PC-3 (cell line): ENCODE measurements at regions of chr11 and their contacts with region 1.

Region 1: DNA sequence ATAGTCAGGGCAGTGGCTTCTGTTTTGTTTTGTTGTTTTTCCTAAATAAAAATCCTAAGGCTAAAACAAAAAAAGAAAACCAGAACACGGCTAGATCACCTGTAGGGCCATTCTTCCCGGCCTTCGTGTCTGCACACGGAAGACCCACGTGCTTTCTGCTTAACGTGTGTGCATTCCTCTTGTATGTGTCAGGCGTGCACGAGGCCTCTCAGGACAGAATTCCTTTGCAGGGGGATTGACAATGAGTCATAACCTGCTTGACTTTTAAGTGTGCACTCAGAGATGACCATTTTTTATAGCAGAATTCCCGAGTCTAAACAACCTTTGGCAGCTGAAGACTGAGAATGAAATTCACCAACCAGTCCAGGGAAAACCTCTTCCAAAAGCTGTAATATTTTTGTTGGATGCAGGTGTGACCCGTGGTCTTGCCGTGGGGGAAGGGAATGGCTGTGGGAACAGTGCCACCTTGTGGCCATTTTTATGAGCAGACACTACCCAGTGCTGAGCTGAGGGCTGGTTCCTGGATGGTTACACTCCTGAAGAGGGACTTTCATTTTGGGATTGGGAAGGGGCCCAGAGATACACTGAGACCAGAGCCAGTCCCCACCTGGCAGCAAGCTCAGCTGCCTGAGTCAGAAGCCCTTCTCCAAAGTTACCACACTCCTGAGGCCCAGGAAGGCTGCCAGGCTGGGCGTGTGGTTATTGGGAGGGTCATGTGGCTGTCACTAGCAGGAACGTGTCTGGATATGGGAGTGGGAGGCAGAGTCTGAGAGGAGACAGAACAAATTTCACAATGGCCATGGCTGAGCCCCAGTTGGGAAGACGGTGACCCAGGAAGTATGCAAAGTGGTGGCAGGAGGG is 35.8 kb upstream of the DKK3 start:
- DNase-seq: peak; percentile 96
- ATAC-seq: peak; percentile 72
- H3K4me3 ChIP-seq: peak overlapping the region; percentile 48
- H3K27ac ChIP-seq: peak overlapping the region; percentile 95
- H3K4me1 ChIP-seq: peaks cover 45% of the 10 kb centered on the region
- H3K27me3 ChIP-seq: no peaks in the 10 kb centered on the region
- CTCF ChIP-seq: peak; percentile 95

Region 2: DNA sequence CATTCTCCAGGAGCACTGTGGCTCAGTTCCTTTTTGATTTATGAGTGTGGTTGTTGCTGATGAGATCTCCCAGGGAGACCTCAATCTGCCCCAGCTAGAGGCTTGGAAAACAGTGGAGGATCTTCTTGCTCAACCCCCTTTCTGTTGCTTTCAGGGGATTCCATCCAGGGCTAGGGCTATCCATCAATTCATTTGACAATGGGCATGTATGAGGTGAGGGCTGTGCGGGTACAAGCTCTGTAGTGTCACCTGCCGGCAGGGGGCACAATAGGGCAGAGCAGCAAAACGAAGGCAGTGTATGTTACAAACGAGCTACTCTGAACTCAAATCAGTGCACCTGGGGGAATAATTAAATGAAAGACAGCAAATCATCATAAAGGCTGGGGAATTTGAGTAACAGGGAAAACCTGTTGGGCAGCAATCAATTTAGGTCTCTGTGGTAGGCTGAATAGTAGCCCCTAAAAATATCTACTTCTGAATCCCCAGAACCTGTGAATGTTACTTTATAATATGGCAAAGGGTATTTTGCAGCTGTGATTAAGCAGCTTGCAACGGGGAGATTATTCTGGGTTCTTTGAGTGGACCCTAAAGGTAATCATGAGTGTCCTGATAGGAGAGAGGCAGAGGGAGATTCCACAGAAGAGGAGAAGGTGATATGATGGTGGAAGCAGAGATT is 1016.0 kb before region 1 on chr11:
- CTCF ChIA-PET with region 1: no interaction called
- POLR2A ChIA-PET with region 1: no interaction called
- intact Hi-C with region 1: loop called (anchors 10 kb)
- DNase-seq: peak; percentile 73
- ATAC-seq: peak; percentile 87
- H3K4me3 ChIP-seq: no peak overlapping the region
- H3K27ac ChIP-seq: no peak overlapping the region
- H3K4me1 ChIP-seq: peaks cover 17% of the 10 kb centered on the region
- H3K27me3 ChIP-seq: 0 out of 2 replicates have a peak, but pooled peaks cover 3% of the 10 kb centered on the region
- CTCF ChIP-seq: peak; percentile 93

Region 3: DNA sequence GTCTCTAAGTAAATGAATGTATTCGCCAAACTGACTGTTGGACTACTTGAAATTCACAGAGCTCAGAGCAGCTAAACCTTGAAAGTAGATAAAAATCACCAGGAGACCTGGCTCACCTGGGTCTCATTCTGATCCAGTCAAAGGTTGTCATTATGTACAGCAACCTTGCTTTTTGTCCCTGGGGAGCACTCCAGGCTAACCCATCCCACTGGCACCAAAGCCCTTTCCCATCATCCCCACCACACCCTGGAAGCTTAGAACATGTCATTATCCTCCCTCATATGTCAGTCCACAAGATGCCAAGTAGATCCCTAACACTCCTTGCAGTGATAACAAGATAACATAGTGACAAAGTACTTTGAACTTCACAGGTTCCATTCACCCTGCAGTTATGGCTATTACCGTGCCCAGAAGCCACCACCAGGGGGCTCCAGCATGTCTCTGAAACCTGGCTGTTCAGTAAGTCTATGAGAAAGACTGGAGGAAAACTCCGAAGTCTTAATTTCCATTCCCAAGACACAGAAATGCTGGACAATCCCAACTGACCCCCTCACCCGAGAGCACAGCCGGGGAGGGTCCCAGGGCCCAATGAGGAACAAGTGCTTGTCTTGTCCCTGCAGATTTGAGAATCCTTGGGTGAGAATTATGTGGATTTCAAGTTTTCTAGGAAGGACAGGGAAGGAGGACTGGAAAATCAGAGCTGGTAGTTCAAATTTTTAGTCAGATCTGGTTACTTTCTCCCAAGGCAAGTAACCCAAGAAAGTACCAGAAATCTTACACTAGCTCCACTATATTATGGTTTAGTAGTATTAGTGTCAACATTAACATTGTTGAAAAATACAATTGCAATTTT is 245.4 kb before region 1 on chr11:
- CTCF ChIA-PET with region 1: interaction called, 6 read pairs
- POLR2A ChIA-PET with region 1: no interaction called
- intact Hi-C with region 1: loop called (anchors 1 kb)
- DNase-seq: peak; percentile 84
- ATAC-seq: peak; percentile 97
- H3K4me3 ChIP-seq: no peak overlapping the region
- H3K27ac ChIP-seq: no peak overlapping the region
- H3K4me1 ChIP-seq: 0 out of 2 replicates have a peak, but pooled peaks cover 4% of the 10 kb centered on the region
- H3K27me3 ChIP-seq: no peaks in the 10 kb centered on the region
- CTCF ChIP-seq: peak; percentile 95

Region 4: GRCh38 chr11:11931461-11932055 is 112.6 kb before region 1 on chr11:
- CTCF ChIA-PET with region 1: interaction called, 18 read pairs
- POLR2A ChIA-PET with region 1: no interaction called
- intact Hi-C with region 1: loop called (anchors 1 kb)
- DNase-seq: peak; percentile 77
- ATAC-seq: peak; percentile 93
- H3K4me3 ChIP-seq: no peak overlapping the region
- H3K27ac ChIP-seq: peak overlapping the region; percentile 38
- H3K4me1 ChIP-seq: peaks cover 13% of the 10 kb centered on the region
- H3K27me3 ChIP-seq: no peaks in the 10 kb centered on the region
- CTCF ChIP-seq: peak; percentile 88

Region 5: GRCh38 chr11:12102588-12103410 is 58.6 kb after region 1 on chr11:
- CTCF ChIA-PET with region 1: interaction called, 4 read pairs
- POLR2A ChIA-PET with region 1: no interaction called
- intact Hi-C with region 1: loop called (anchors 2 kb)
- DNase-seq: peak; percentile 29
- ATAC-seq: peak; percentile 62
- H3K4me3 ChIP-seq: no peak overlapping the region
- H3K27ac ChIP-seq: no peak overlapping the region
- H3K4me1 ChIP-seq: no peaks in the 10 kb centered on the region
- H3K27me3 ChIP-seq: no peaks in the 10 kb centered on the region
- CTCF ChIP-seq: peak; percentile 43

Region 6: GRCh38 chr11:12235947-12236743 is 192.0 kb after region 1 on chr11:
- CTCF ChIA-PET with region 1: no interaction called
- POLR2A ChIA-PET with region 1: no interaction called
- intact Hi-C with region 1: loop called (anchors 1 kb)
- DNase-seq: peak; percentile 75
- ATAC-seq: peak; percentile 34
- H3K4me3 ChIP-seq: no peak overlapping the region
- H3K27ac ChIP-seq: peak overlapping the region; percentile 97
- H3K4me1 ChIP-seq: peaks cover 56% of the 10 kb centered on the region
- H3K27me3 ChIP-seq: no peaks in the 10 kb centered on the region
- CTCF ChIP-seq: peak; percentile 77

Region 7: DNA sequence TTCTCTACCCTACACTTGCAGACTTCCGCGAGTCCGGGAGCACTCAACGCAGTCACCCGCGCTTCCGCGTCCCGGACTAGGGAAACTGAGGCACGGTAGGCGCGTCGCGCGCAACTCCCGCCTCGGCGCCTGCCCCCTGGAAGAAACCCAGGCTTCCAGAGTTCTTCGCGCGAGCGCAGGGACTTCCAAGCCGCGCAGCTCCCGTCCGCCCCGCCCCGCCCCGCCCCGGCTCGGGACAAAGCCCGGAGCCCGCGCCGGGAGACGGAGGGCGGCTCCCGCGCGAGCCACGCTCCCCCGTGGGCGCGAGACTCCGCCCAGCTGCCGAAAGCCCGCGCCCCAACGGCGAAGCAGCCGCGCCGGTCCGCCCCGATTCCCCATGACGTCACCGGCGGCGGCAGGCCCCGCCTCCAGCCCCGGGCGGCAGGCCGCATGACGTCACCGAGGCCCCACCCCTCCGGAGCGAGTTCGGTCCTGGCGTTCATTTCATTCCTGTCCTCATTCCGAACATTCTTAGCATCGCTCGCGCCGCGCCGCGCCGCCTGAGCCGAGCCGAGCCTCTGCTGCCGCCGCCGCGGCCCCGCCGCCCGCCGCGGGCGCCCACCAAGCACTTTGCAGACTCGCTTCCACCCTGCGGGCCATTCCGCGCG is 629.9 kb after region 1 on chr11 and contains the start of gene TEAD1:
- CTCF ChIA-PET with region 1: interaction called, 11 read pairs
- POLR2A ChIA-PET with region 1: no interaction called
- intact Hi-C with region 1: no loop called
- DNase-seq: peak; percentile 93
- ATAC-seq: peak; percentile 80
- H3K4me3 ChIP-seq: peak within 1 kb of the TSS; percentile 97
- H3K27ac ChIP-seq: peak within 1 kb of the TSS; percentile 63
- H3K4me1 ChIP-seq: peaks cover 32% of the 10 kb centered on the region
- H3K27me3 ChIP-seq: no peaks in the 10 kb centered on the region
- CTCF ChIP-seq: no peak
- total RNA-seq, gene TEAD1: 70.2 and 148 TPM in 2 replicates